ENCODE measurements at regions of chr17 and their contacts with region 1.

Region 1: DNA sequence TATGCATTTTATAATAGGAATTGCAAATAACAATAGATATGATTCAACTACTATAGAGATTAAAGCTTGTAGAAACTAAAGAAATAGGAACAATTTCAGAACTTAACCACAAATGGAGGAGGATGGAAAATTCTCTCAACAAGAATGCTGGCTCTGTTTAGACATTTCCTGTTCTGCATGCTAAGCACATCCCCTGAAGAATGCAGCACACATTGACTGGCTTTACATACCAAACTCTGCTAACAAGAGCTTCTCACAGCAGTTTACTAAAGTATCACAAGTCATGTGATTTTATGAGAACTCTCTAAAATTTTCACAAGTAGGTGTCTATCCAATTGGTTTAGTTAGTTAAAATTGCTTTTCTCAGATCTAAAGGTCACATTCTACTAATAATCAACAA is 85.2 kb downstream of the SPAG9 start:
- DNase-seq: no peak
- H3K27ac ChIP-seq: no peak overlapping the region
- CTCF ChIP-seq: no peak

Region 2: DNA sequence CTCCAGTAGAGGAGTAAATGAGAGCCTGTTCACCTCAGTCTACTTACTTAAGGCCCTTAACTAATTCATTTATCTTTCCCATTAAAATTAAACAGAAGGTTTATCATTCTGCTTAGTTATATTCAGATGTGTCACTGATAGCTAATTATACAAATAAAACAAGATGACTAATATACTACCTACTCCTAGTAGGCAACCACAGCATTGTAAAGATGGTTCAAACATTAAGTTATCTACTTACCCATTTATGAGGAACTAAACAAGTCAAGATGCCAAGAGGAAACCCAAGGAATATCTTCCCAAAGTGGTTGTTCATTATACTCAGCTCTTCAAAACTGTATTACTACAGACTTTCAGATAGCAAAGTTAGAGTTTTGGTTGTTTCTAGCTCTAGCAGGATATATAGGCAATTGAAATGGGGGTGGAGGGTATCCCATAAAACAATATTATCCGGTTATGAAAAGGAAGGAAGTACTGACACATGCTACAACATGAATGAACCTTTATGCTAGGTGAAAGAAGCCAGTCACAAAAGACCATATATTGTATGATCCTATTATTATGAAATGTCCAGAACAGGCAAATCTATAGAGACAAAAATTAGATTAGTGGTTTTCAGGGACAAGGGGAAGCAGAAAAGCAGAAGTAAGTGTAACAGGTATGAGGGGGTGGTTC is 28.8 kb after region 1 on chr17:
- CTCF ChIA-PET with region 1: no interaction called
- POLR2A ChIA-PET with region 1: no interaction called
- DNase-seq: no peak
- H3K27ac ChIP-seq: no peak overlapping the region
- CTCF ChIP-seq: no peak

Region 3: GRCh38 chr17:51097708-51098446 is 62.4 kb after region 1 on chr17:
- CTCF ChIA-PET with region 1: no interaction called
- POLR2A ChIA-PET with region 1: interaction called, 11 read pairs
- DNase-seq: no peak
- H3K27ac ChIP-seq: no peak overlapping the region
- CTCF ChIP-seq: no peak